CD4-positive, alpha-beta memory T cell (primary cell): ENCODE measurements at regions of chr3 and their contacts with region 1.

Region 1: GRCh38 chr3:196192036-196192523 is 19.1 kb downstream of the ZDHHC19 start:
- DNase-seq: peak; percentile 47 to 83 (median 59)
- H3K4me3 ChIP-seq: peak overlapping the region in 1 of 2 donors; percentile 34
- H3K4me3 Mint-ChIP-seq: peak overlapping the region in 7 of 8 donors; percentile 33 to 85 (median 66)
- H3K27ac ChIP-seq: peak overlapping the region; percentile 75
- H3K27ac Mint-ChIP-seq: peak overlapping the region; percentile 95 to 99 (median 97)
- H3K4me1 ChIP-seq: peaks cover 47% of the 10 kb centered on the region
- H3K4me1 Mint-ChIP-seq: peaks cover 14 to 54% (median 22%) of the 10 kb centered on the region in 4 donors
- H3K27me3 ChIP-seq: no peaks in the 10 kb centered on the region
- H3K27me3 Mint-ChIP-seq: no peaks in the 10 kb centered on the region

Region 2: GRCh38 chr3:196207833-196208607 is 15.9 kb after region 1 on chr3:
- CTCF ChIA-PET with region 1: interaction called, 14 read pairs
- POLR2A ChIA-PET with region 1: interaction called, 3 read pairs
- intact Hi-C with region 1: no loop called
- DNase-seq: peak; percentile 51 to 84 (median 57)
- H3K4me3 ChIP-seq: peak overlapping the region in 1 of 2 donors; percentile 51
- H3K4me3 Mint-ChIP-seq: peak overlapping the region; percentile 75 to 91 (median 87)
- H3K27ac ChIP-seq: no peak overlapping the region
- H3K27ac Mint-ChIP-seq: peak overlapping the region in 6 of 7 donors; percentile 46 to 89 (median 83)
- H3K4me1 ChIP-seq: peaks cover 11% of the 10 kb centered on the region
- H3K4me1 Mint-ChIP-seq: peaks cover 11 to 23% (median 12%) of the 10 kb centered on the region in 4 donors
- H3K27me3 ChIP-seq: no peaks in the 10 kb centered on the region
- H3K27me3 Mint-ChIP-seq: no peaks in the 10 kb centered on the region